ENCODE measurements at regions of chr13 and their contacts with region 1.

Region 1: GRCh38 chr13:91785431-91786119 is 387.2 kb downstream of the GPC5 start:
- DNase-seq: no peak
- H3K4me3 ChIP-seq: no peak overlapping the region
- H3K27ac ChIP-seq: no peak overlapping the region
- H3K4me1 ChIP-seq: no peaks in the 10 kb centered on the region
- H3K27me3 ChIP-seq: no peaks in the 10 kb centered on the region
- CTCF ChIP-seq: no peak

Region 2: GRCh38 chr13:91825516-91825915 is 39.9 kb after region 1 on chr13:
- intact Hi-C with region 1: loop called (anchors 2 kb)
- DNase-seq: no peak
- H3K4me3 ChIP-seq: no peak overlapping the region
- H3K27ac ChIP-seq: no peak overlapping the region
- H3K4me1 ChIP-seq: no peaks in the 10 kb centered on the region
- H3K27me3 ChIP-seq: no peaks in the 10 kb centered on the region
- CTCF ChIP-seq: no peak

Measured in colonic mucosa (tissue), 4 donors.